ENCODE measurements at regions of chr16 and their contacts with region 1.

Region 1: GRCh38 chr16:48623304-48624016 is 13.5 kb upstream of the N4BP1 start:
- DNase-seq: peak; percentile 77
- H3K4me3 Mint-ChIP-seq: peak overlapping the region; percentile 81
- H3K27ac Mint-ChIP-seq: peak overlapping the region; percentile 72
- H3K4me1 Mint-ChIP-seq: peaks cover 42% of the 10 kb centered on the region
- H3K27me3 Mint-ChIP-seq: peaks cover 8% of the 10 kb centered on the region

Region 2: DNA sequence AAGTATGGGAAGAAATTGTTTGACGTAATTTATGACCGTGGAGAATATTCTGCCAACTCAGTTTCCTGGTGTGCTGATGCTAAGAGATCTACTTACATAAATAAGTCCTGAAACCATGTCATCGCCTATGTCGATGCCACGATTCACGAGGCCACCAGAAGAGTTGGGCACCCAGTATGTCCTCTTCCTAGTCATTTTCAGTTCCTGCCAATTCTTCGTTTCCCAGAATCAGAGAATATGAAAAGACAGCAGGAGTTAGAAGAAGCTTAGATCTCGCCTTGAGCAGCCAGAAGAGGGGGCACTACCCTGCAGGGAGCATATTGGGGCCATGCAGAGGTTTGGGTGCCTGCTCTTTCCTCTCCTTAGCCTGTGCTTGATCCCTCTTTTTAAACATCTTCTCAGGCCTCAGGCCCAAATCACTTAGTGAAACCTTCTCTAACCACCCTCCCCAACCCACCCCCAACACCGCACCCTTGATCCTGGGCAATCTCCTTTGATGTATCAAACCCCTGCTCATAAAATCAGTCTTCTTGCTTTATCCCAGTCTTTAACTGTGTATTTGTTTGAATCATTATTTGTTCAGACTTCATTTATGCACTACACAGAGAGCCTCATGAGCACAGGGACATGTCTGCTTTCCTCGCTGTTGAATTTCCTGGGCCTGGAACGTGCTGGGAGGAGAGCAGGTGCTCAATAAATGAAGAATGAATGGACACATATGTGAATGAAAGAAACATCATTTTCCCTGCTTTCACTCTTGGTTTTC is 391.6 kb before region 1 on chr16:
- intact Hi-C with region 1: loop called (anchors 2 kb)
- DNase-seq: peak; percentile 28
- H3K4me3 Mint-ChIP-seq: no peak overlapping the region
- H3K27ac Mint-ChIP-seq: peak overlapping the region; percentile 55
- H3K4me1 Mint-ChIP-seq: peaks cover 25% of the 10 kb centered on the region
- H3K27me3 Mint-ChIP-seq: peaks cover 14% of the 10 kb centered on the region

Region 3: DNA sequence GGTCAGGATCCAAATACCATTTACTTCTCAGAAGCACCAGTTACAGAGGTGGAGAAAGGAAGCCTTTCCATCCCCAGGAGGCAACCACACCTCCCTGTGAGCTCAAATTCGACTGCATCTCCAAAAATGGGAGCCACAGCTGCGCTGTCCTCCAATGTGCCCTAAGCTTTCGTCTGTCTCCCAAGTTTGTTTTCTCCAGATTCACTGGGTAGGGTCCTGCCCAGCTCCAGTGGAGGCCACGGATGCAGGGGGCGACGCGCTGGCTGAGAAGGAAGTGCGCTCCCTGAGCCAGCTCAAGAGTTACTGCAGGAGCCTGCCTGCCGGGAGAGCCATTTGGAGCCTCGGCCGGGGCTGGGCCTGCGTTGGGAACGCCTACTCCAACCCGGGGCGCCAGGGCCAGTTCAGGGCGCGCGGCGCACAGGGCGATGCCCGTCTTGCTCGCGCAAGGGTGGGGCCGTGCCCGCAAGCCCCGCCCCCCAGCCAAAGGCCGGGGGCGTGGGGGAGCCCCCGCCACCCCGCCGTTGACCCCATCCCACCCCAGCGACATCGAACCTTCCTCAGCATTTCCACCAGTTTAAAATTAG is 257.8 kb before region 1 on chr16:
- intact Hi-C with region 1: loop called (anchors 1 kb)
- DNase-seq: peak; percentile 80
- H3K4me3 Mint-ChIP-seq: peak overlapping the region; percentile 90
- H3K27ac Mint-ChIP-seq: peak overlapping the region; percentile 96
- H3K4me1 Mint-ChIP-seq: peaks cover 59% of the 10 kb centered on the region
- H3K27me3 Mint-ChIP-seq: no peaks in the 10 kb centered on the region

Region 4: GRCh38 chr16:48385272-48386150 is 237.9 kb before region 1 on chr16 and contains the start of gene SIAH1:
- intact Hi-C with region 1: loop called (anchors 1 kb)
- DNase-seq: peak; percentile 85
- H3K4me3 Mint-ChIP-seq: peak within 1 kb of the TSS; percentile 97
- H3K27ac Mint-ChIP-seq: peak within 1 kb of the TSS; percentile 95
- H3K4me1 Mint-ChIP-seq: peaks cover 29% of the 10 kb centered on the region
- H3K27me3 Mint-ChIP-seq: peaks cover 3% of the 10 kb centered on the region
- total RNA-seq, gene SIAH1: 15.6 and 16.8 TPM in 2 replicates

Region 5: DNA sequence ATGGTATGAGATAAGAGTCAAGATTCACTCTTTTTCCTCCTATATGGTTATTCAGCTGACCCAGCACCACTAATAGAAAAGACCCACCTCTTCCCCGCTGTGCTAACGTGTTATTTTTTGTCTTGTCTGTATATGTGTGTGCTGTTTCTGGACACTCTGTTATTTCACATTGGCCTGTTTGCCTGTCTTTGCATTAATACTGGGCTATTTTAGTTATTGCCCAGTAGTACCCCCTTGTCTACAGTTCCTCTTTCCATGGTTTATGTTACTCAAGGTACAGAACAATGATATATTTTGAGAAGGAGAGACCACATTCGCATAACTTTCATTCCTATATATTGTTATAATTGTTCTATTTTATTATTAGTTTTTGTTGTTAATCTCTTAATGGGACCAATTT is 164.3 kb before region 1 on chr16:
- intact Hi-C with region 1: loop called (anchors 2 kb)
- DNase-seq: no peak
- H3K4me3 Mint-ChIP-seq: no peak overlapping the region
- H3K27ac Mint-ChIP-seq: peak overlapping the region; percentile 0
- H3K4me1 Mint-ChIP-seq: peaks cover 18% of the 10 kb centered on the region
- H3K27me3 Mint-ChIP-seq: peaks cover 28% of the 10 kb centered on the region

Region 6: GRCh38 chr16:48596326-48596725 is 27.1 kb before region 1 on chr16:
- intact Hi-C with region 1: loop called (anchors 1 kb)
- DNase-seq: peak; percentile 54
- H3K4me3 Mint-ChIP-seq: peak overlapping the region; percentile 57
- H3K27ac Mint-ChIP-seq: peak overlapping the region; percentile 90
- H3K4me1 Mint-ChIP-seq: peaks cover 53% of the 10 kb centered on the region
- H3K27me3 Mint-ChIP-seq: no peaks in the 10 kb centered on the region